Cardiac septum (tissue), 1 donor: ENCODE measurements at regions of chr9 and their contacts with region 1.

Region 1: GRCh38 chr9:78566948-78567684 is 270.2 kb downstream of the PSAT1 start:
- DNase-seq: no peak

Region 2: GRCh38 chr9:78620764-78621163 is 53.6 kb after region 1 on chr9:
- intact Hi-C with region 1: loop called (anchors 10 kb)
- DNase-seq: no peak